ENCODE measurements at regions of chrX and their contacts with region 1.

Region 1: DNA sequence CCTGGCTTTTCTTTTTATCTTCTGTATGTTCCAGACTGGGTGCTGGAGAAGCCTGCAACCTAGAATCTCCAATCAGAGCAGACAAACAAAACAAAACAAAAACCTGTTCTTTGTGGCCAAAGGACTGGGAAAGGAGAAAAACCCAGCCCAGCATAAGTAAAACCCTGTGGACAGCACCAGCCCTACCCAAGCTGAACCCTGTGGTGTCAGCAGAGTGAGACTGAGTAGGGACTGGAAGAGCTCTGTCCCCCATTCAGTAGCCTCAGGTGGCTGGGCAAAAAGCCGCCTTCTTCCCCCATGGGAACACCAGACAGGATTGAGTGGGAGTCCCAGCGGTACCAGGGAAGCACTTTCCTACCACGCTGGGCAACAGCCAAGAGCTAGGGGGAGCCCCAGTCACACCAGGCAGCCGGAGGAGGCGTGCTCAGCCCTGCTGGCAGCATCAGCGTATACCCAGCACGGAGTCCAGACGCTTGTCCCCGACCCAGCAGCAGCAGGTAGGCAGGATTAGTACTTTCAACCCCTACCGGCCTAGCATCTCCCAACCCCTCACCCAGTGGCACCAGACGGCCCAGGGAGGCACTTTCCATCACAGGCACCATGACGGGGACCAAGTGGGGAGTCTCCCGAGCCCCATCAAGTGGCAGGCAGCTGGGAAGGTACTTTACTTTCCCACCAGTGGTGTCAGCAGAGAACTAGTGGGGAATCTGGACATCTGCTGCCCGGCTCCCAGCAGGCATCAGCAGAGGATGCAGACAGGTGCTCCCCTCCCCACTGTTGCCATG is 8.6 kb upstream of the JADE3 start:
- DNase-seq: peak; percentile 84
- H3K4me3 Mint-ChIP-seq: peak overlapping the region; percentile 68
- H3K27ac Mint-ChIP-seq: no peak overlapping the region
- H3K4me1 Mint-ChIP-seq: no peaks in the 10 kb centered on the region
- H3K27me3 Mint-ChIP-seq: no peaks in the 10 kb centered on the region
- CTCF ChIP-seq: peak; percentile 65

Region 2: GRCh38 chrX:47030339-47030738 is 126.7 kb after region 1 on chrX:
- CTCF ChIA-PET with region 1: interaction called, 16 read pairs
- intact Hi-C with region 1: loop called (anchors 1 kb)
- DNase-seq: peak; percentile 35
- H3K4me3 Mint-ChIP-seq: no peak overlapping the region
- H3K27ac Mint-ChIP-seq: no peak overlapping the region
- H3K4me1 Mint-ChIP-seq: no peaks in the 10 kb centered on the region
- H3K27me3 Mint-ChIP-seq: no peaks in the 10 kb centered on the region
- CTCF ChIP-seq: no peak

Region 3: GRCh38 chrX:47093248-47093647 is 189.6 kb after region 1 on chrX:
- CTCF ChIA-PET with region 1: interaction called, 7 read pairs
- intact Hi-C with region 1: loop called (anchors 5 kb)
- DNase-seq: no peak
- H3K4me3 Mint-ChIP-seq: no peak overlapping the region
- H3K27ac Mint-ChIP-seq: no peak overlapping the region
- H3K4me1 Mint-ChIP-seq: no peaks in the 10 kb centered on the region
- H3K27me3 Mint-ChIP-seq: no peaks in the 10 kb centered on the region
- CTCF ChIP-seq: peak; percentile 12